Ascending aorta (tissue), 2 donors: ENCODE measurements at regions of chr16 and their contacts with region 1.

Region 1: GRCh38 chr16:67521095-67521804 is 7.4 kb upstream of the RIPOR1 start:
- DNase-seq: peak; percentile 79 to 99
- H3K4me3 ChIP-seq: peak overlapping the region; percentile 55 to 63
- H3K27ac ChIP-seq: peak overlapping the region; percentile 84 to 96
- H3K4me1 ChIP-seq: peaks cover 0 to 5% of the 10 kb centered on the region in 2 donors
- H3K27me3 ChIP-seq: no peaks in the 10 kb centered on the region
- CTCF ChIP-seq: peak; percentile 80 to 98 (median 89)

Region 2: GRCh38 chr16:67499106-67499505 is 22.1 kb before region 1 on chr16:
- intact Hi-C with region 1: loop called (anchors 1 kb)
- DNase-seq: no peak
- H3K4me3 ChIP-seq: no peak overlapping the region
- H3K27ac ChIP-seq: no peak overlapping the region
- H3K4me1 ChIP-seq: no peaks in the 10 kb centered on the region
- H3K27me3 ChIP-seq: no peaks in the 10 kb centered on the region
- CTCF ChIP-seq: no peak

Region 3: DNA sequence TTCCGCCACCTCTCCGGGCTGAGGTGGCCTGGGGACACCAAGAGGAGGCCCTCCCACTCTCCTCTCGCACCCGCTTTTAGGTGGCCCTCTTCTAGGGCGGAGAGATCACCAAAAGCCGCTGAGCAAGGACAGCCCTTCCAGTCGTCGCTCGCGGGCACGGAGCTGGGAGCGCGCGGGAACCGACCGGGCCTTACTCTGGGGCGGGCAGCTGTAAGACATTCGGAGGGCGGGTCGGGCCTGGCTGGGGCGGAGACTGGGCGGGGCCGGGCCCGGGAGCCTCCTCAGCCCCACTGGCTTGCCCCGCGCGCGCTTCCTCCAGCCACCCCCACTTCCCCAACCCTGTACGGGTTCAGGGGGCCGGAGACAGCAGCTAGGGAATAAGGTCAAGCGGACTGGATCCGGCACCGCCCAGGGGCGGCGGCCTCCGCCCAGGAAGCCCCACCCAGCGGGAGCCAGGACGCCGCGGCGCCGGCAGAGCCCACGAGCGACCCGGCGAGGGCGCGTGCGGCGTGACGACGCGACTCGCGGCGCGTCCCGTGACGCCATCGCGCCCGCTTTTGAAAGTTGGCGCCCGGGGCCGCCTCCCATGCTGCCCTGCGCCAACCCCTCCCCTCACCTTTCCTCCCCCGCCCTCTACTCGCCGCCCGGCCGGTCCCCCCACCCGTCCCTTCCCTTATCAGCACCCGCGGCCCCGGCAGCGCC is 40.7 kb after region 1 on chr16:
- intact Hi-C with region 1: loop called (anchors 1 kb)
- DNase-seq: peak; percentile 89 to 97
- H3K4me3 ChIP-seq: peak overlapping the region; percentile 99
- H3K27ac ChIP-seq: peak overlapping the region; percentile 100
- H3K4me1 ChIP-seq: peaks cover 7 to 24% of the 10 kb centered on the region in 2 donors
- H3K27me3 ChIP-seq: no peaks in the 10 kb centered on the region
- CTCF ChIP-seq: no peak

Region 4: GRCh38 chr16:67653128-67653786 is 132.0 kb after region 1 on chr16:
- intact Hi-C with region 1: no loop called
- DNase-seq: no peak
- H3K4me3 ChIP-seq: peak overlapping the region; percentile 43 to 54
- H3K27ac ChIP-seq: no peak overlapping the region
- H3K4me1 ChIP-seq: peaks cover 5 to 7% of the 10 kb centered on the region in 2 donors
- H3K27me3 ChIP-seq: peaks cover 19% of the 10 kb centered on the region
- CTCF ChIP-seq: no peak

Region 5: DNA sequence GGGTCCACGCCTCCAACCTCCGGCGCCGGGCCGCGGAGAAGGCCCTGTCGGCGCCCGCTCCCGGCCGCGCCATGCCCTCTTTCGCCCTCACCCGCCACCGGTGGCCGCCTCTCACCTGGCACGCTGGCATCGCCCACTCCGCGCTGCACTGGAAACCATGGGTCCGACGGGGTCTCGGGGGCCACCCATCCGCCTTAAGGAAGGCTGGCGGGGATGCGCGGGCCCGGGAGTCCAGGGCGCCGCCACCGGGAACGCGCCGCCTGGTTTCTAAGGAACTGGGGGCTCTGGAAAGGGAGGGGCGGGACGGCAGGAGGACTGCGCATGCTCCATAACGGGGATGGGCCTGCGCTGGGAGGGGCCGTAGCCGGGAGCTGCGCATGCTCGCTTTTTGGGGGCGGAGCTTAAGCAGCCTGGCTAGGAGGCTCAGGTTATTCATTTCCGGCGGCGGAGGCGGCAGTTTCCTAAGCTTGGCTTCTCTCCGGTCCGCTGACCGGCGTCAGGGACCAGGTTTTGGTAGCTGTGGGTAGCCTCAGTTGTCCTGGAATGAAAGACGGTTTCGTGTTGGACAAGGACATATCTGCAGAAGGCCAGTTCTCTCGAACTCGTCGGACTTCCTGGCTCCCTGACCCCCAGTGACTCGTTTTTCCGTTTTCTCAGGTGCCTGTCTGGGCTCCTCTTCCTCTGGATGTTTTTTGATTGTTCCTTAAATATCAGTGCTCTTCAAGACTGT is 198.0 kb after region 1 on chr16 and contains the start of gene GFOD2:
- intact Hi-C with region 1: loop called (anchors 2 kb)
- DNase-seq: peak; percentile 78 to 98
- H3K4me3 ChIP-seq: peak within 1 kb of the TSS; percentile 87 to 99
- H3K27ac ChIP-seq: peak within 1 kb of the TSS; percentile 87 to 94
- H3K4me1 ChIP-seq: peaks cover 0 to 12% of the 10 kb centered on the region in 2 donors
- H3K27me3 ChIP-seq: no peaks in the 10 kb centered on the region
- CTCF ChIP-seq: no peak
- total RNA-seq, gene GFOD2: 43.5 TPM